ENCODE measurements at regions of chr4 and their contacts with region 1.

Region 1: DNA sequence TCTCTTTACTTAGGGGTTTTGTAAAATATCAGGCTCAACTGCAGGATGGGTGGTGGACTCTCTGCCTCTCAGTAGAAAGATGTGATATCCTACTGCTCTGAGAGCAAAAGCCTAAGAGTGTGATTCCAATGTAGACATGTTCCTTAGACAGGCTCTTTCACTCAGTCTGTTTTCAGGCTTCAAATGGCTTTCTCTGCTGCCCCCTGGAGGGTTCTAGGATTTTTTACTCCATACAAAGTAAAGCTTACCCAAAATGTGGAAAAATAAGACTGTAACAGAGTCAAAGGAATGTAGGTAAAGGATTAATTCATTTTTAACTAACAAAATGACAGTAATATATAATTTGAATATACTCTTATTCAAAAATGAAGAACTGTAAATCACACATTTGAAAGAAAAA is 32.1 kb downstream of the ZGRF1 start:
- DNase-seq: peak; percentile 39
- ATAC-seq: peak; percentile 88
- H3K4me3 ChIP-seq: no peak overlapping the region
- H3K27ac ChIP-seq: no peak overlapping the region
- H3K4me1 ChIP-seq: no peaks in the 10 kb centered on the region
- H3K27me3 ChIP-seq: no peaks in the 10 kb centered on the region
- CTCF ChIP-seq: peak; percentile 60
- EP300 ChIP-seq: no peak
- POLR2A ChIP-seq: no peak
- RAD21 ChIP-seq: no peak; the same call in 1 of the 2 replicates

Region 2: DNA sequence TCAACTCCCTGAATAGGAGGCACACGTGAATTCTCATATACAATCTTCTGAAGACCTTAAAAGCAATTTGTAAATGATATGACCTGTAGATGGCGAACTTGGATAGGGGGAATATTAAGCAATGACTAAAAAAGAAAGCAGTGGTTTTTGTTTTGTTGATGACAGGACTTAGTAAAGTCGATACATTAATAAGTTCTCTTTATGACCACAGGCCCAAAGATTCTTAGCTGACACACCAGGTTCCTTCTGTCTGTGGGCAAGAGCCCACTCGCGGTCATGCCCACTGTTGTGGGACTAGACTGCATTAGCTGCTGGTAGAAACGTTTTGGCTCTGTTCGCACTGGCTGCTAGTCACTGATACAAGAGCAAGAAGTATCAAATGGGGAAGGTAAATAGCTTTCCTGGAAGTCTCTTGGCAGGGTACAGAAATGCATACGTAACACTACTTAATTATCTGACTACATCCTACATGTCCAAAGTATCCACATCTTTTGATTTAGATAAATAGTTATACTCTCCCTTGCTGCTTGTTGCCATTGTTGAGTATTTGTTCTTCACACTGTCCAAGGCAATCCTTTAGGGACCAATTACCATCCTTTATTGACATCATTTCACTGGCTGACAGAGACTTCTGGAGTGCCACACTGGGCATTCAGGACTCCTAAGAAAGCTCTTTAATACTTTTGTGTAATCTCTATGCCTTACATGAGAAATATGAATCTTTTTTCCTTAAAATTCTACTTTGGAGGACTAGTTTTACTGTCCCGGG is 276.4 kb before region 1 on chr4:
- CTCF ChIA-PET with region 1: interaction called, 10 read pairs
- POLR2A ChIA-PET with region 1: no interaction called
- in situ Hi-C with region 1: loop called (anchors 10 kb)
- intact Hi-C with region 1: loop called (anchors 1 kb)
- DNase-seq: peak; percentile 38
- ATAC-seq: peak; percentile 37; the same call in 1 of the 3 replicates
- H3K4me3 ChIP-seq: no peak overlapping the region
- H3K27ac ChIP-seq: no peak overlapping the region
- H3K4me1 ChIP-seq: no peaks in the 10 kb centered on the region
- H3K27me3 ChIP-seq: no peaks in the 10 kb centered on the region
- CTCF ChIP-seq: peak; percentile 61
- EP300 ChIP-seq: no peak
- POLR2A ChIP-seq: no peak
- RAD21 ChIP-seq: peak; percentile 50; the same call in 1 of the 2 replicates

Region 3: GRCh38 chr4:112348488-112349158 is 256.0 kb before region 1 on chr4:
- CTCF ChIA-PET with region 1: no interaction called
- POLR2A ChIA-PET with region 1: no interaction called
- in situ Hi-C with region 1: no loop called
- intact Hi-C with region 1: loop called (anchors 5 kb)
- DNase-seq: peak; percentile 65
- ATAC-seq: peak; percentile 100
- H3K4me3 ChIP-seq: no peak overlapping the region; a peak in 1 of 6 replicates
- H3K27ac ChIP-seq: no peak overlapping the region
- H3K4me1 ChIP-seq: no peaks in the 10 kb centered on the region
- H3K27me3 ChIP-seq: no peaks in the 10 kb centered on the region
- CTCF ChIP-seq: peak; percentile 67
- EP300 ChIP-seq: no peak
- POLR2A ChIP-seq: no peak
- RAD21 ChIP-seq: peak; percentile 41; the same call in 1 of the 2 replicates

Region 4: DNA sequence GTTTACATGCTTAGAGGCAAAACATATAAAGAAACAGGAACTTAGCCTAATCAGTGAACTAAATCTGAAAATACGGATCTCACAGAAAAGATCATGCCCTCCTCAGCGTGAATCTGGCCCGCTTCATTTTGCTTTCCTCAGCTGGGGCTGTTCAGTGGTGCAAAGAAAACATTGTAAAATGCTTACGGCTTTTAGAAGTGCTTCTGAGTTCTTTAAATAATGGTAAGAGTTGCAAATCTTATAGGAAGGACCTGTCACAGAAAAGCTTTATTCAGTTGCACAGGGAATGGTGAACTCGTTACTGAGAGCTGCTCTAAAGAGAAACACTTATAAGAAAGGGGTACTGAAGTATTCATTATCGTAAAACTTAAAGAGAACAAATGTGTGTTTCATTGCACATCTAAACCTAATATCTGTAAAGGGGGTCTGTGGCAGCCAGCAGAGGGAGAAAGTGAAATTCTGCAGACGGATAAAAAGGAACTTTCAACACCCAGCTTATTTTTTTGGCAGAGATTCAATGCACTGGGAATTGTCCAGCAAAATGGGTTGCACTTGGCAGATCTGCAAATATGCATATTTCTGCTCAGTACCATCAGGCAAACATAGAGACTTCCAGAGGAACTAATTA is 305.6 kb after region 1 on chr4:
- CTCF ChIA-PET with region 1: no interaction called
- POLR2A ChIA-PET with region 1: no interaction called
- in situ Hi-C with region 1: no loop called
- intact Hi-C with region 1: no loop called
- DNase-seq: no peak
- ATAC-seq: no peak
- H3K4me3 ChIP-seq: no peak overlapping the region
- H3K27ac ChIP-seq: no peak overlapping the region
- H3K4me1 ChIP-seq: no peaks in the 10 kb centered on the region
- H3K27me3 ChIP-seq: no peaks in the 10 kb centered on the region
- CTCF ChIP-seq: no peak
- EP300 ChIP-seq: no peak
- POLR2A ChIP-seq: no peak
- RAD21 ChIP-seq: no peak